H1 (cell line): ENCODE measurements at regions of chr7 and their contacts with region 1.

Region 1: DNA sequence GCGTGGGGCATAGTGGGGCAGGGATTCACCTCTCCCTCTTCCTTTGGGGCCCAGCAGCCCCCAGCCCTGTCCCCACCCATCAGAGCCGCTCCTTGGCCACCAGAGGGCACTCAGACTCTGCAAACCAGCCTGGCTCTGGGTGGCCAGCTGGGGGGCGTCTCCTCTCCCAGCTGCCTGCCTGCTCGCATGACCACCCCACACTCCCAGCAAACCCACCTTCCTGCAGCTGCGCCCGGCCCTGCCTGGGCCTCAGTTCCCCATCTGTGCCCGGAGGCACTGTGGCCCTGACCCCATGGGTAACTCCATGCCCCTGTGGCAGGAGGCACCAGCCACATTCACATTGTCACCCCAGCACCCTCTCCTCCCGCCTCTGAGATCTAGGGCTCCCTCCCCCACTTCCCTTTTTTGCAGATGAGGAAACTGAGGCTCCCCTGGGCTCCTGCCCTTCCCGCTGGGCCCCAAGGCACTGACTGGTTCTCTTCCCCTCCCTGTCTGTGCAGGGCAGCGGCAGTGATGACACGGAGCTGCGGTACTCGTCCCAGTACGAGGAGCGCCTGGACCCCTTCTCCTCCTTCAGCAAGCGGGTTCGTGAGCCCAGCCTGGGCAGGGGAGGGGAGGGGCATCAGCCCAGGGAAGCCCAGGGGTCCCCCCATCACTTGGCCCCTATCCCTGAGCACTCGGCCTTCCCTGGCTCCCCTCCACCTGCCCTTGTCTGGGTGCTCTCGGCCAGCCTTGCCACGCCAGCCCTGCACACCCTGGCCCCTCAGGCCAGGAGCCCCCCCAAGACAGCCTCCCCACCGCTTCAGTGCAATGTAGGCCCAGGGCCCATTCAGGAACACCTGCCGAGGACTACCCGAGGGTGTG is 6.9 kb upstream of the SH2B2 start:
- DNase-seq: peak; percentile 31 to 84
- H3K4me3 ChIP-seq: no peak overlapping the region
- H3K27ac ChIP-seq: no peak overlapping the region
- H3K4me1 ChIP-seq: peaks cover 0 to 7% (median 5%) of the 10 kb centered on the region in 4 experiments; a peak in 5 of 7 replicates
- H3K27me3 ChIP-seq: no peaks in the 10 kb centered on the region
- CTCF ChIP-seq: peak in 2 of 3 experiments; percentile 88 to 95; a peak in 3 of 4 replicates
- EP300 ChIP-seq: no peak
- POLR2A ChIP-seq: no peak
- RAD21 ChIP-seq: peak; percentile 92 to 96

Region 2: DNA sequence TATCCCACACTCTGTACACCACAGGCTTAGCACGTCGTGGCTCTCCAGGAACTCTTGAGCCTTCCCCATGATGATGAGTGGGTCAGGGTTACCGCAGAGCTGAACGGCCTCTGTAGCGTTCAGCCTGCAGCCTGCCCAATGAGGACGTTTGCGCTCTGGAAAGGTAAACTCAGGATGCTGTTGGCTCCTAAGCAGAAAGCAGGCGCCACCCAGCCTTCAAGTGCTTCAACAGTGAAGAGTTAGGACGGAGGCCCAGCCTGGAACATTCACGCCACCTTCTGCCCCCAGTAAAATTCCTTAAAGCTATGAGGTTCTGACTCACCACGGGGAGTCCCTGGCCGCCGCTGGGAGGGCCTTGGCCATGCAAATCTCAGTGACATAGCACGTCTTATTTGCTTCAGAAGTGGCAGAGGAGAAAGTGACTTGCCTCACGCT is 154.6 kb before region 1 on chr7:
- CTCF ChIA-PET with region 1: no interaction called
- POLR2A ChIA-PET with region 1: no interaction called
- DNase-seq: peak; percentile 65 to 75
- H3K4me3 ChIP-seq: no peak overlapping the region
- H3K27ac ChIP-seq: peak overlapping the region; percentile 68; the same call in 1 of the 2 replicates
- H3K4me1 ChIP-seq: peaks cover 5 to 10% (median 7%) of the 10 kb centered on the region in 4 experiments
- H3K27me3 ChIP-seq: no peaks in the 10 kb centered on the region
- CTCF ChIP-seq: peak in 2 of 3 experiments; percentile 24 to 26; a peak in 3 of 4 replicates
- EP300 ChIP-seq: no peak
- POLR2A ChIP-seq: no peak
- RAD21 ChIP-seq: peak; percentile 42 to 50

Region 3: DNA sequence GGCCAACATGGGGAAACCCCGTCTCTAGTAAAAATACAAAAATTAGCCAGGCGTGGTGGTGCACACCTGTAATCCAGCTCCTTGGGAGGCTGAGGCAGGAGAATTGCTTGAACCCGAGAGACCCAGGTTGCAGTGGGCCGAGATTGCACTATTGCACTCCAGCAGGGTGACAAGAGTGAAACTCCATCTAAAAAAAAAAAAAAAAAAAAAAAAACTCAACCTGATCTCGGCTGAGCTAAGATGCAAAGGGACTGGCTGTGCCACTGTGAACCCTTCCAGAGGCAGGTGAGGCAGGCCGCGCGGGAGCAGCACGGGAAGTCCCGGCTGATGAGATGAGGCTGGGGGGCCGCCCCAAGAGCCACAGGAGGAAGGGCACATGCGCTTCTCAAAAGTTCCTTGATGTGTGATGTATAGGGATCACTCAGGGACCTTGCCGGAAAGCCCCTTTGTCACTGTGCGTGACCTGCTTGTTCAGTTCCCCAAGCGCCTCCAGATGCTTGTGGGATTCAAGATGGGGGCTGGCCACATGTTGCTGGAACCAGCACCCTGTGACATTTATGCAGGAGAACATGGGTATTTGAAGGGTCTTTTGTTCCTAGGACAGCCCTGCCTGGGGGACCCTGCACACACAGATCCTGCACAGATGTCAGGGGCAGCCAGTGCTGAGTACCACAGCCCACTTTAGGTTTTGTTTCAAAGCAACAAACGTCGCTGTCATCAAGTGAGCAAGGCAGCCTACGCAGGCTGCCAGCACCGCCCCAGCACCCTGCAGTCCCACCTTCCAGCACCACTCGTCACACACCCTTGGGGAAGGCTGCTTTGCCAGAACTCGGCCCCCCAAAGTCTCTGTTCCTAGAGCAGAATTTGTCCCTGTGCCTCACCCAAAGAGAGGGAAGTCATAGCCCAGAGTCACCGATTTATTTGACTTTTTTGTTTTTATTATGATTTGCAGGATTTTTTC is 67.9 kb before region 1 on chr7:
- CTCF ChIA-PET with region 1: no interaction called
- POLR2A ChIA-PET with region 1: no interaction called
- DNase-seq: no peak
- H3K4me3 ChIP-seq: no peak overlapping the region
- H3K27ac ChIP-seq: no peak overlapping the region
- H3K4me1 ChIP-seq: no peaks in the 10 kb centered on the region; a peak in 1 of 7 replicates
- H3K27me3 ChIP-seq: no peaks in the 10 kb centered on the region
- CTCF ChIP-seq: no peak
- EP300 ChIP-seq: no peak
- POLR2A ChIP-seq: no peak
- RAD21 ChIP-seq: no peak

Region 4: DNA sequence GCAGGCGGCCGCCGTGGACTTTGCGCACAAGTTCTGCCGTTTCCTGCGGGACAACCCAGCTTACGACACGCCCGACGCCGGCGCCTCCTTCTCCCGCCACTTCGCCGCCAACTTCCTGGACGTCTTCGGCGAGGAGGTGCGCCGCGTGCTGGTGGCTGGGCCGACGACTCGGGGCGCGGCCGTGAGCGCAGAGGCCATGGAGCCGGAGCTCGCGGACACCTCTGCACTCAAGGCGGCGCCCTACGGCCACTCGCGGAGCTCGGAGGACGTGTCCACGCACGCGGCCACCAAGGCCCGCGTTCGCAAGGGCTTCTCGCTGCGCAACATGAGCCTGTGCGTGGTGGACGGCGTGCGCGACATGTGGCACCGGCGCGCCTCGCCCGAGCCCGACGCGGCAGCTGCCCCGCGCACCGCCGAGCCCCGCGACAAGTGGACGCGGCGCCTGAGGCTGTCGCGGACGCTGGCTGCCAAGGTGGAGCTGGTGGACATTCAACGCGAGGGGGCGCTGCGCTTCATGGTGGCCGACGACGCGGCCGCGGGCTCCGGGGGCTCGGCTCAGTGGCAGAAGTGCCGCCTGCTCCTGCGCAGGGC is 21.0 kb after region 1 on chr7:
- CTCF ChIA-PET with region 1: interaction called, 26 read pairs
- POLR2A ChIA-PET with region 1: no interaction called
- DNase-seq: peak; percentile 38 to 94
- H3K4me3 ChIP-seq: peak overlapping the region in 1 of 4 experiments; percentile 25; a peak in 1 of 8 replicates
- H3K27ac ChIP-seq: no peak overlapping the region
- H3K4me1 ChIP-seq: peaks cover 0 to 9% (median 2%) of the 10 kb centered on the region in 4 experiments; a peak in 3 of 7 replicates
- H3K27me3 ChIP-seq: peaks cover 0 to 7% (median 3%) of the 10 kb centered on the region in 4 experiments; a peak in 4 of 7 replicates
- CTCF ChIP-seq: peak in 2 of 3 experiments; percentile 86 to 92; a peak in 3 of 4 replicates
- EP300 ChIP-seq: no peak
- POLR2A ChIP-seq: no peak
- RAD21 ChIP-seq: peak; percentile 64 to 82